ENCODE measurements at regions of chr19 and their contacts with region 1.

Region 1: GRCh38 chr19:923280-924176 is 2.3 kb upstream of the ARID3A start:
- DNase-seq: no peak
- H3K4me3 Mint-ChIP-seq: peak overlapping the region; percentile 74
- H3K27ac Mint-ChIP-seq: no peak overlapping the region
- H3K4me1 Mint-ChIP-seq: peaks cover 29% of the 10 kb centered on the region
- H3K27me3 Mint-ChIP-seq: no peaks in the 10 kb centered on the region

Region 2: GRCh38 chr19:913080-913748 is 10.3 kb before region 1 on chr19 and contains the start of gene R3HDM4:
- CTCF ChIA-PET with region 1: no interaction called
- POLR2A ChIA-PET with region 1: no interaction called
- DNase-seq: peak; percentile 84
- H3K4me3 Mint-ChIP-seq: peak within 1 kb of the TSS; percentile 83
- H3K27ac Mint-ChIP-seq: peak within 1 kb of the TSS; percentile 93
- H3K4me1 Mint-ChIP-seq: peaks cover 37% of the 10 kb centered on the region
- H3K27me3 Mint-ChIP-seq: peaks cover 4% of the 10 kb centered on the region
- total RNA-seq, gene R3HDM4: 120 to 121 TPM

Region 3: GRCh38 chr19:984165-984967 is 60.8 kb after region 1 on chr19 and contains the start of gene WDR18:
- CTCF ChIA-PET with region 1: interaction called, 34 read pairs
- POLR2A ChIA-PET with region 1: interaction called, 4 read pairs
- DNase-seq: peak; percentile 91
- H3K4me3 Mint-ChIP-seq: peak within 1 kb of the TSS; percentile 89
- H3K27ac Mint-ChIP-seq: peak within 1 kb of the TSS; percentile 91
- H3K4me1 Mint-ChIP-seq: peaks cover 27% of the 10 kb centered on the region
- H3K27me3 Mint-ChIP-seq: no peaks in the 10 kb centered on the region
- total RNA-seq, gene WDR18: 39.2 to 49.2 TPM